Activated T-helper 1 cell treated with anti-CD3 and anti-CD28 coated beads, Interleukin-12 subunit alpha, Interleukin-12 subunit beta, Interleukin-2, Interleukin-4 antibody, amounts not matched to agents 30 ng/mL and 10 ng/mL and 1 ng/mL, durations not matched to agents 14 hours and 24 hours and 36 hours (primary cell): ENCODE measurements at regions of chr9 and their contacts with region 1.

Region 1: DNA sequence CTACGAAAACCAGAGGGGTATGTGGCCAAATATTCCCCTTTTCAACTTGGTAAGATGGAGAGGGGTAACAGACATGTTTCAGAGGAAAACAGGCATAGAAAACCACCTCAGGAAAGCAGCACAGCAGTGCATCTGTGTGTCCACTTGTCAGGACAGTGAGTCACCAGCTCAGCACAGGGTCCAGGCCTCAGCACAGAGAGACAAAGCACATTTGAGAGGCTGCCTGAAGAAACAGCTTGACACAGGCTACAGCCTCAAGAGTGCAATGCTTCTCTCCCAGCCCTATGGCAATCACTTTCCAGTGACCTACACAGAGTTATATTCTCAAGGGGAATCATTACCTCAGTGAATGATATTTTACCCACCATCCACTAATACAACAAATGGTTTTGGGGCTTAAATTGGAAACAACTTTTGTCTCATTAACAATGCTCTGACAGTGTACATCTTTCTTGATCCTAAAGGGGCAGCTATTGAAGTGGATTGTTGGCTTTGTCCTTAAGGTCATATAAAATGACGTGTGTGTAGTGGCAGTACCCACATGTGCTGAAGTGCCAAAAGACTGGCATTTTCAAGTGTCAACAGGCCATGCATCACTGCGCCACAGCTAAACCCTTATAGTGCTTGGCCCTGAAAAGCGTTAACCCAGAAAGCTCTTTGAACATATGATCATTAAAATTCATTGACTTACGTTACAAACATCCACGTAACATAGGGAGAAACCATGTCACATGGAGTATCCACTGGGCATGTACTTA is 46.4 kb downstream of the ERMP1 start:
- DNase-seq: no peak
- H3K4me3 Mint-ChIP-seq: no peak overlapping the region
- H3K27ac Mint-ChIP-seq: no peak overlapping the region
- H3K4me1 Mint-ChIP-seq: peaks cover 60% of the 10 kb centered on the region
- H3K27me3 Mint-ChIP-seq: no peaks in the 10 kb centered on the region

Region 2: DNA sequence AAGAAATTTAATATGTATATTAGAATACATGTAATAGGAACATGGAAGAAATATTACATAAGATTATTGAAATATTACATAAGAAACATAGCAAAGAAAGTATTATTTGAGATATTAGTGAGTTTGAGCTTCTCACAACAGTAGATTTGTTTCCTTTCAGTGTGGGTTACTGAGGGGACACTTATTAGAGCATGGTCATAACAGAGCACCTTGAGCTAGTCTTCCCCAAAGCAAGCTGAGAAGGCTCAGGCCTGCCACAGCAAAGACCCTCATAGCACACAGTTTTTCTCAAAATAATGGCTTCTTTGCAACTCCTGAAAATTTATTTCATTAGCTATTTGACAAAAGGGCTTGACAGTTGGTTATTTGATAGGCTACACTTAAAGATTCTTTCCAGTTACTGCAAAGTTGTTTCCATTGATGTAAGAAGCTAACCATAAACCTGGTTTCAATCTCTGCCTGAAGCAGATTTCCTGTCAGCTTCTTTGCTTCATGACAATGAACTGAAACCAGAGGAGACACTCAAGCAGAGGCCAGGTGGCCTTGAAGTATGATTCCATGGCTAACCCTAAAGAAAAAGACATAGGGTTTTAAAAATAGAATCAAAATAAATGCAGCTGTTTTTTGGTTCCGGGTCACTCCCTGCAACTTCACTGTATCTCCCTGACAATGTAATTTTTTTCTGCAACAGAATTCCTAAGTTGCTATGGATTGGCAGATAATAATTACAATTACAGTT is 22.2 kb before region 1 on chr9:
- intact Hi-C with region 1: loop called (anchors 1 kb)
- DNase-seq: no peak
- H3K4me3 Mint-ChIP-seq: peak overlapping the region; percentile 25
- H3K27ac Mint-ChIP-seq: peak overlapping the region; percentile 27
- H3K4me1 Mint-ChIP-seq: peaks cover 57% of the 10 kb centered on the region
- H3K27me3 Mint-ChIP-seq: no peaks in the 10 kb centered on the region

Region 3: GRCh38 chr9:5999443-6000101 is 213.0 kb after region 1 on chr9:
- intact Hi-C with region 1: no loop called
- DNase-seq: no peak
- H3K4me3 Mint-ChIP-seq: no peak overlapping the region
- H3K27ac Mint-ChIP-seq: no peak overlapping the region
- H3K4me1 Mint-ChIP-seq: peaks cover 48% of the 10 kb centered on the region
- H3K27me3 Mint-ChIP-seq: no peaks in the 10 kb centered on the region

Region 4: GRCh38 chr9:6645355-6646292 is 859.1 kb after region 1 on chr9 and contains the start of gene GLDC:
- intact Hi-C with region 1: no loop called
- DNase-seq: peak; percentile 20
- H3K4me3 Mint-ChIP-seq: peak within 1 kb of the TSS; percentile 77
- H3K27ac Mint-ChIP-seq: peak within 1 kb of the TSS; percentile 59
- H3K4me1 Mint-ChIP-seq: peaks cover 19% of the 10 kb centered on the region
- H3K27me3 Mint-ChIP-seq: peaks cover 63% of the 10 kb centered on the region
- total RNA-seq, gene GLDC: 1.4 and 1.8 TPM in 2 replicates